H1 (cell line): ENCODE measurements at regions of chr3 and their contacts with region 1.

Region 1: GRCh38 chr3:111717601-111718000 is 122.5 kb upstream of the ZBED2 start:
- DNase-seq: peak; percentile 57 to 59
- H3K4me3 ChIP-seq: no peak overlapping the region
- H3K27ac ChIP-seq: no peak overlapping the region
- H3K4me1 ChIP-seq: no peaks in the 10 kb centered on the region
- H3K27me3 ChIP-seq: no peaks in the 10 kb centered on the region
- CTCF ChIP-seq: peak; percentile 60 to 98 (median 94)
- EP300 ChIP-seq: no peak
- POLR2A ChIP-seq: no peak
- RAD21 ChIP-seq: peak; percentile 99 to 100

Region 2: DNA sequence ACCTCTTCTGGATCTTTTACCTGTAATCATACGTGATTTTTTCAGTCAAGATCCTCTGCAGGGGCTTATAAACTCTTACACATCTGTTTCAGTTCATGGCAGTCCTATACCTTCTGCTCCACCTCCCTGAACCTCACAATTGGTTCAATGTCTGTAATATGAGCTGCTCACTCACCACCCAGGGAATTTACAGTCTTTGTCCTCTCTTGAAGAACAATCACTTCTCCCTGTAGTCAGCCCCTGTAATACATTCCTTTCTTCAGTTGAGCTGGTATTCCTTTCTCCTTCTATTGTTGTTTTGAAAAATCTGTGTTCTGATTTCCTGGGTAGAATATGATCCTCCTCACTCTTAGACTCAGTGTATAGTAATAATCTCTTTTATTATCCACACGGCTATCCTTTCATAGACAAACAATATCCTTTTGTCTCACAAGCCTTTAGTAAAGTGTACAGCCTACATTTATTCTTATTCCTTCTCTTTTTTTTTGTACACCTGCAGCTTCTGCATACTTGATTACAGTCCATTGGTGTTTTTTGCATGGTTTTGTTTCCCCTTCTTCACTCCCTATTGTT is 544.2 kb before region 1 on chr3:
- CTCF ChIA-PET with region 1: no interaction called
- POLR2A ChIA-PET with region 1: no interaction called
- DNase-seq: no peak
- H3K4me3 ChIP-seq: no peak overlapping the region
- H3K27ac ChIP-seq: no peak overlapping the region
- H3K4me1 ChIP-seq: peaks cover 0 to 3% (median 0%) of the 10 kb centered on the region in 4 experiments; a peak in 2 of 7 replicates
- H3K27me3 ChIP-seq: no peaks in the 10 kb centered on the region
- CTCF ChIP-seq: no peak
- EP300 ChIP-seq: no peak
- POLR2A ChIP-seq: no peak
- RAD21 ChIP-seq: no peak

Region 3: DNA sequence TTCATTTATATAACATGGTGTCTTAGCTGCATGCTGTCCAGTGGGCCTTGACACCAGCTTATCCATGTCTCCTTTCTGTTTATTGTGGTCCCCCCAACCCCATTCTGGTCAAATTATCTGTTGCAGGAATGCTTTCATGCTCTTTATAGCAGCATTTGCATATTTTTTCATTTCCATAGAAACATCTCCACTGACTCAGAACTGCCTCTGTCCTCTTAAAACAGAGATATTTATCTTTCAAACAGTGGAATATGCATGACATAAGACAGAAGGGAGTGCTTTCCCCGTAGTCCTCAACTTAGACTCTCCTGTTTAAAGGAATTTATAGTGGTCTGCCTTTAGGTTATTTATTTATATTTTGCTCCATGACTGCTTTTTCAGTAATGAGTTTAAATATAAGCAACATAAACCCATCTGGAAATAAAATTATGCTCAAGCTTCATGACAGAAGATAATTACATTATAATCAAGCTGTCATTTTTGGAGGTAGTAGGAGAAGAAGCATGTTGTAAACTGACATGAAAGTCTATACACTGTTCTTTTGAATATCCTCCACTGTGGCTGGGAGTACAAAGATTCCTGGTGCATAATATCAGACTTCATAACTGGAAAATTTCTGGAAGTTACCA is 355.1 kb before region 1 on chr3:
- CTCF ChIA-PET with region 1: no interaction called
- POLR2A ChIA-PET with region 1: no interaction called
- DNase-seq: no peak
- H3K4me3 ChIP-seq: no peak overlapping the region
- H3K27ac ChIP-seq: no peak overlapping the region
- H3K4me1 ChIP-seq: no peaks in the 10 kb centered on the region
- H3K27me3 ChIP-seq: no peaks in the 10 kb centered on the region
- CTCF ChIP-seq: no peak
- EP300 ChIP-seq: no peak
- POLR2A ChIP-seq: no peak
- RAD21 ChIP-seq: no peak

Region 4: GRCh38 chr3:111440166-111440565 is 277.4 kb before region 1 on chr3:
- CTCF ChIA-PET with region 1: no interaction called
- POLR2A ChIA-PET with region 1: no interaction called
- DNase-seq: no peak
- H3K4me3 ChIP-seq: no peak overlapping the region
- H3K27ac ChIP-seq: no peak overlapping the region
- H3K4me1 ChIP-seq: no peaks in the 10 kb centered on the region
- H3K27me3 ChIP-seq: no peaks in the 10 kb centered on the region
- CTCF ChIP-seq: no peak
- EP300 ChIP-seq: no peak
- POLR2A ChIP-seq: no peak
- RAD21 ChIP-seq: no peak

Region 5: DNA sequence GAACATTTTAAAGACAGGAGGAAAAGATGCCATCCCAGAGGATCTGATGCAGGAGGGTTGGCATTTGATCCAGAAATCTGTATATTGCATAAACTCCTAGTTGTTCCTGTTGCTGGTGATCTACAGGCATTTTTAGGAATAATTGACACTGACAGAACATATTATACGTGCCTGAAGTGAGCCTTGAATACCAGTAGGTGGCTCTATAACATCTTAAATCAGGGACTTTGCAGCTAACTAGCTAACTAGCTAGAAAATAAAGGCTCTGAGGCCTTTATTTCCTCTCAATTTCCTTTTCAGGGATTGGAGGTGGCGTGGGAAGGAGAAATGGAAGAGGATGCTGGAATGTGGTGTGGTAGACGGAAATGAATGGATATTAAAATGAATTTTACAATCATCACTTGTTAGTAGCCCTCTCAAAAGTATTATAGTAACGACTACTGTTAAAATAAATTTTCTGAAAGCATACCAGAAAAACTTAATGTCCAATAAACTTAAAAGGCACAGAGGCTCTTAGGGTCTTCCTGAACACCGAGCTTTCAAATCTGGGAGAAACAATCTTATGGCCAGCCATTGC is 48.6 kb before region 1 on chr3:
- CTCF ChIA-PET with region 1: interaction called, 11 read pairs
- POLR2A ChIA-PET with region 1: no interaction called
- DNase-seq: no peak
- H3K4me3 ChIP-seq: no peak overlapping the region
- H3K27ac ChIP-seq: no peak overlapping the region
- H3K4me1 ChIP-seq: peaks cover 0 to 2% (median 0%) of the 10 kb centered on the region in 4 experiments; a peak in 1 of 7 replicates
- H3K27me3 ChIP-seq: peaks cover 0 to 9% (median 6%) of the 10 kb centered on the region in 4 experiments; a peak in 6 of 7 replicates
- CTCF ChIP-seq: peak in 2 of 3 experiments; percentile 65 to 75; a peak in 3 of 4 replicates
- EP300 ChIP-seq: no peak
- POLR2A ChIP-seq: no peak
- RAD21 ChIP-seq: peak; percentile 81 to 89

Region 6: GRCh38 chr3:111737706-111738086 is 20.1 kb after region 1 on chr3:
- CTCF ChIA-PET with region 1: interaction called, 13 read pairs
- POLR2A ChIA-PET with region 1: no interaction called
- DNase-seq: no peak
- H3K4me3 ChIP-seq: no peak overlapping the region
- H3K27ac ChIP-seq: no peak overlapping the region
- H3K4me1 ChIP-seq: no peaks in the 10 kb centered on the region
- H3K27me3 ChIP-seq: no peaks in the 10 kb centered on the region
- CTCF ChIP-seq: no peak
- EP300 ChIP-seq: no peak
- POLR2A ChIP-seq: no peak
- RAD21 ChIP-seq: no peak

Region 7: DNA sequence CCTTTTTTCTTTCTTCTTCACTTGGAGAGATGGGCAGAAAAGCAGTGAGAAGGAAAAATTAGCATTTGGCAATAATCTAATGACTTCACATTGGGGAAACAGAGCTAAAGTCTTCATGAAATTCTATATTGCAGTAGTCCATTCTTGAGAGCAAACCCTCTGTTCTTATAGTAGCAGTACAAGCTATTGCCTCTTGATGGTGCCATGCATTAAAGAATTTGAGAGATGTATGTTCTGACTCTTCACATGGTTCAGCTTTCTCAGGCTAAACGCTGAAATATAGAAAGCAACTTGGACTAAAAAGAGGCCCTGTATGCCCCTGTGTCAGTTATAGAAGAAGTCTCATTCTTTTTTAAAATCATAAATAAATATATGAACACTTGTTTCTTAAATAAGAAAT is 177.5 kb after region 1 on chr3:
- CTCF ChIA-PET with region 1: interaction called, 12 read pairs
- POLR2A ChIA-PET with region 1: no interaction called
- DNase-seq: no peak
- H3K4me3 ChIP-seq: no peak overlapping the region
- H3K27ac ChIP-seq: no peak overlapping the region
- H3K4me1 ChIP-seq: no peaks in the 10 kb centered on the region
- H3K27me3 ChIP-seq: no peaks in the 10 kb centered on the region
- CTCF ChIP-seq: peak in 2 of 3 experiments; percentile 55; a peak in 2 of 4 replicates
- EP300 ChIP-seq: no peak
- POLR2A ChIP-seq: no peak
- RAD21 ChIP-seq: peak; percentile 76 to 80

Region 8: DNA sequence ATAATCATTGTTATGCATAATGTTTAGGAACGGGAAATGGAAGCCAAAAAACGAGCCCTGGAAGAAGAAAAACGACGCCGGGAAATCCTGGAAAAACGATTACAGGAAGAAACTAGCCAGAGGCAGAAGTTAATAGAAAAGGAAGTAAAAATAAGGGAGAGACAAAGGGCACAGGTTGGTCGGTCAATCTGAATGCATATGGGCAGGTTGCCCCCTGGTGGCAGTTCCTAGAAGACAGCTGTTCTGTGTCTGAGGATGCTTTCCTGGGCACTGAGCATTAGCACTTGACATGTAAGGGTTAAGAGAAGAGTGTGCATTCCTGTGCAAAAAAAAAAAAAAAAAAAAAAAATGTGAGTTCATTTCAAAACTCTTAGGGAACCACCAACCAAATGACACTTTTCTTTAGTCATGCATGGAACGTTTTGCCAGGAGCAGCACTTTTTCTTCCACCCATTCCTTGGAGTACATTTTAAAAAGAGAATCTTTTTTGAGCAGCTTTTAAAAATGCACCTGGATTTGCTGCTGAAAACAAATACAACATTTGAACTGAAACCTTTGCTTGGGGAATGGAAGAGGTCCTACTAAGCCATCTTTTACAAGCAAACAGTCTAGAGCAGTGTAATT is 250.2 kb after region 1 on chr3:
- CTCF ChIA-PET with region 1: interaction called, 258 read pairs
- POLR2A ChIA-PET with region 1: no interaction called
- DNase-seq: peak; percentile 58 to 93
- H3K4me3 ChIP-seq: no peak overlapping the region
- H3K27ac ChIP-seq: no peak overlapping the region
- H3K4me1 ChIP-seq: no peaks in the 10 kb centered on the region
- H3K27me3 ChIP-seq: no peaks in the 10 kb centered on the region
- CTCF ChIP-seq: peak; percentile 70 to 91 (median 88)
- EP300 ChIP-seq: no peak
- POLR2A ChIP-seq: no peak
- RAD21 ChIP-seq: peak; percentile 95 to 98

Region 9: DNA sequence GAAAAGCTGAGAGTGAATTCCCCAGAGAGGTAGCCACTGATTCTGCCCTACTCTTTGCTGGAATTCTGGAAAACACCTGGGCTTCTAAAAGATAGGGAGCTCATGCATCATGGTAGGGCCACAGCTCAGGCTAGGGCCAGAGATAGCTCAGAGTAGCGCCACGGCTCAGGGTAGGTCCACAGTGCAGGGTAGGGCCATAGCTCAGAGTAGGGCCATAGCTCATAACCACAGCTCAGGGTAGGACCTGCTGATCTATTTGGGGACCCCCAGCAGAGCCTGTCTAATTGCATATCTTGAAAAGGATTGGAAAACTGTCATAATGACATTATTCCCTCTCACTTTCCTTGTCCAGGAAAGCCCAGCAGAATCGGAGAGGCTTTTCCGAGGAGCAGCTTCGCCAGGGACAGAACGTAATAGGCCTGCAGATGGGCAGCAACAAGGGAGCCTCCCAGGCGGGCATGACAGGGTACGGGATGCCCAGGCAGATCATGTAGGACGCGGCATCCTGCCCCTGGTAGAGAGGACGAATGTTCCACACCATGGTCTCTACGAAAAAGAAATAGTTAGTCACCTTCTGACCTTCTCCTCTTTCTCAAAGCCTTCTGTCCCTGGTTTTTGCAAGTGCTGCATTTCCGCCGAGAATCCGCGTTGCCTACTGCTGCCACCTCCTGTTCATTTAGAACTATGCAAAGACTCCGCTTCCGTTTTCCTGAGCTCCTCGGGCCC is 295.6 kb after region 1 on chr3:
- CTCF ChIA-PET with region 1: interaction called, 81 read pairs
- POLR2A ChIA-PET with region 1: no interaction called
- DNase-seq: peak; percentile 59 to 67
- H3K4me3 ChIP-seq: no peak overlapping the region
- H3K27ac ChIP-seq: no peak overlapping the region
- H3K4me1 ChIP-seq: no peaks in the 10 kb centered on the region
- H3K27me3 ChIP-seq: no peaks in the 10 kb centered on the region
- CTCF ChIP-seq: peak; percentile 66 to 84 (median 73)
- EP300 ChIP-seq: no peak
- POLR2A ChIP-seq: no peak
- RAD21 ChIP-seq: peak; percentile 86 to 87